Endothelial cell of umbilical vein (primary cell): ENCODE measurements at regions of chrX and their contacts with region 1.

Region 1: GRCh38 chrX:154986826-154987576 is 35.5 kb downstream of the F8 start:
- DNase-seq: peak; percentile 1
- H3K4me3 ChIP-seq: no peak overlapping the region
- H3K27ac ChIP-seq: no peak overlapping the region
- H3K4me1 ChIP-seq: no peaks in the 10 kb centered on the region
- H3K27me3 ChIP-seq: no peaks in the 10 kb centered on the region
- CTCF ChIP-seq: no peak
- POLR2A ChIP-seq: no peak

Region 2: DNA sequence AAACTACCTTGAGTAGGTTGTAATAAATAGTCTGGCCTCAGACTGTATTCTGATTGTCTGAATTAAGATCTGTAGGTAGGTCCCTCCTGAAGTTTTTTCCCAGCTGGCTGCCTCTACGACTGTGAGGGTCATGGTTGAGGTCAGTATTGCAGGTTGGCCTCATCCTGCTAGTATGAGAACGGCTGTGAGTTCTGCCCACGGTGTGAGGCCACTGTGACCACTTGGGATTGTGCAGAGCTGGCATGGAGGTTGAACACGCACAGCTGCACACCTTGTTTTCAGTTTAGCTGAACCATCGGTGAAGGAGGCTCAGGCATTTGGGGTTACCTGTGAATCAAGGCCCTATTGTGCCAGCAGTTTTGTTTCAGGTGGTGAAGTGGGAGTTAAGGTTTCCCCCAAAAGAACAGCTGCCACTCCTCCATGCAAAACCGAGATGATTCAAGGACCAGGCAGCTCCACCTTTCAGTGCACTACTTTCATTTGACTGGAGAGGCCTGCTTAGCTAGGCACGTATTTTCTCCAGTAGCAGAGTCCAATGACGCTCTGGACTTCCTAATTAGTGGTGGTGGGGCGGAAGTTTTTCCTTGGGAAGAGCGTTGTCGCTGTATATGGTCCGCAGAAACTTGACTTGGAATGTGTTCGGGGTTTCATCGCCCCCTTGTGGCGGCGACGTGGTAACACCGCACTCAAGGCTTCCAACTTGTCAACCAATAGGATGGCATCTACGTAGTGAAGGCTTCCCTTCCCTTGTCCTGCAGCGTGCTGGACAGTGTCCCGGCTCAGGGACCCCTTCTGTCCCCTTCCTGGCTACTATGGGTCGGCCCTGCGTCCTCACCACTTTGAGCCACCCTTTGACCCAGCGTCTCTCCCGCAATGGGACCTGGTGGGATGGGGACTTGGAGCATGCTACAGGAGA is 70.1 kb after region 1 on chrX:
- CTCF ChIA-PET with region 1: interaction called, 11 read pairs
- POLR2A ChIA-PET with region 1: no interaction called
- dilution Hi-C with region 1: no loop called
- intact Hi-C with region 1: no loop called
- DNase-seq: peak; percentile 82
- H3K4me3 ChIP-seq: no peak overlapping the region
- H3K27ac ChIP-seq: no peak overlapping the region
- H3K4me1 ChIP-seq: peaks cover 11% of the 10 kb centered on the region
- H3K27me3 ChIP-seq: no peaks in the 10 kb centered on the region
- CTCF ChIP-seq: peak; percentile 61 to 78
- POLR2A ChIP-seq: no peak